ENCODE measurements at regions of chr4 and their contacts with region 1.

Region 1: GRCh38 chr4:107472276-107472948 is 247.6 kb downstream of the PAPSS1 start:
- DNase-seq: no peak
- H3K4me3 ChIP-seq: no peak overlapping the region
- H3K27ac ChIP-seq: no peak overlapping the region
- H3K4me1 ChIP-seq: no peaks in the 10 kb centered on the region
- H3K27me3 ChIP-seq: no peaks in the 10 kb centered on the region
- CTCF ChIP-seq: no peak
- POLR2A ChIP-seq: no peak

Region 2: GRCh38 chr4:107512549-107512948 is 40.1 kb after region 1 on chr4:
- intact Hi-C with region 1: loop called (anchors 2 kb)
- DNase-seq: no peak
- H3K4me3 ChIP-seq: no peak overlapping the region
- H3K27ac ChIP-seq: no peak overlapping the region
- H3K4me1 ChIP-seq: no peaks in the 10 kb centered on the region
- H3K27me3 ChIP-seq: no peaks in the 10 kb centered on the region
- CTCF ChIP-seq: no peak
- POLR2A ChIP-seq: no peak